ENCODE measurements at regions of chr10 and their contacts with region 1.

Region 1: GRCh38 chr10:116787893-116788665 is 45.7 kb upstream of the HSPA12A start:
- DNase-seq: peak; percentile 88
- ATAC-seq: peak; percentile 91

Region 2: GRCh38 chr10:116683821-116684220 is 104.3 kb before region 1 on chr10:
- intact Hi-C with region 1: loop called (anchors 5 kb)
- DNase-seq: no peak
- ATAC-seq: no peak

Region 3: DNA sequence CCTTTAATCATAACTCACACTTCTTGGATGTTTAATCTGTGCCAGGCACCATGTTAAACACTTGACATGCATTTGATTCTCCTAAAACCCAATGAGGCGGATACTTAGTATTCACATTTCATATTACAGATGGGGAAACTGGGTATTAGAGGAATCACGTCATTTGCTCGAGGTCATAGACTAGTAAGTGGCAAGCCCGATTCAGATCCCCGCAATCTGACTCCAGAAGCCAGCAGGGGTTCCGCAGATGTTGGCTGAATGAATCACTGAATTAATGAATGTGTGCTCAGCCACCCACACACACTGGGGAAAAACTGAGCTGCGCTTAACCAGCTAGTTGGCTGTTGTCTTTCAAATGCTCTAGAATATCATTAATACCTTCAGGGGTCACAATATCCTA is 38.7 kb after region 1 on chr10:
- intact Hi-C with region 1: no loop called
- DNase-seq: no peak
- ATAC-seq: no peak

Region 4: GRCh38 chr10:116925056-116925455 is 137.0 kb after region 1 on chr10:
- intact Hi-C with region 1: no loop called
- DNase-seq: no peak
- ATAC-seq: no peak

Region 5: GRCh38 chr10:117186832-117187615 is 398.9 kb after region 1 on chr10:
- intact Hi-C with region 1: no loop called
- DNase-seq: no peak
- ATAC-seq: no peak